ENCODE measurements at regions of chr12 and their contacts with region 1.

Region 1: DNA sequence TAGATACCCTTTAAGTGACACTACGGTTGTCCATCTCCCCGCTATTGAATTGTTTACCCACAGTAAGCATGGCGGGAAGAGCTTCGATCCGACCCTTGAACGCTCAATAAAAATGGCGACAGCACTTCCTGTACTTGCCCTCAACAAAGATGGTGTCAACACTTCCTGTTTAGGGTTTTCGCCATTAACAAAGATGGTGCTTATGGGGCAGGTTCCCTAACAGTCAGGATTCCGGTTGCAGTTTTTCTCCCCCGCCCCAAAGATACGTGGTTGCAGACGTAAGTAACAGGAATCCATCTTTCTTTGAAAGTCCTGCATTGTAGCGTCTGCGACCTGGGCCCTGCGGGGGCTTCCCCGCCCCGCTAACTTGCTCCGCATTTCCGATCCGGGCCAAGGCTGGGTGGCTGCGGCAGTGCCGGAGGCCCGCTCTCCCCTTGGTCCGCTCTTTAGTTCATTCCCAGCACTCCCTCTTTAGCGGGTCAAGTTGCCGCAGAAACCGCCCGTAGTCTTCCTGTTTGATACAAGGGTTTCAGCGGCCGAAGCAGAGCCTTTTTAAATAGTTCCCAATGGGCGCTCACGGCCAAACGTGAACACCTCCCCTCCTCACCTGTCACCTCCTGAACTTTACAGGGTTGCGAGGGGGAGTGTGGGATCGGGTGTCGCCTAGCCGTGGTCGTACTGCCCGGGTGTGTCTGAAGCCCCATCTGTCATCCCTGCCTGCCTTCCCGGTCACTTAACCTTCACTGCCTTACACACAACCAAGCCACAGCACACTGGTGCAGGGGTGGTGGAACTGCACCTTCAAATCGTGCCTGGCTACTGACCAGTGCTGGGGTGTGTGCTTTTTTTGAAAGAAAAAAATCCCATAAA is at the start of gene CRADD:
- DNase-seq: peak; percentile 79 to 90 (median 83)
- ATAC-seq: peak; percentile 86 to 94 (median 92)
- H3K4me3 ChIP-seq: peak within 1 kb of the TSS; percentile 36 to 84 (median 70)
- H3K27ac ChIP-seq: peak within 1 kb of the TSS; percentile 84 to 100 (median 97)
- H3K4me1 ChIP-seq: peaks cover 0 to 52% (median 24%) of the 10 kb centered on the region in 12 donors
- H3K27me3 ChIP-seq: no peaks in the 10 kb centered on the region
- CTCF ChIP-seq: no peak
- POLR2A ChIP-seq: peak in 1 of 2 donors; percentile 73
- total RNA-seq, gene CRADD: 40.1 to 100 (median 56.1) TPM

Region 2: GRCh38 chr12:93603762-93604161 is 73.7 kb before region 1 on chr12:
- intact Hi-C with region 1: loop called in 2 of 10 experiments (anchors 5 to 10 kb)
- DNase-seq: no peak
- ATAC-seq: peak; percentile 51 to 57 (median 54)
- H3K4me3 ChIP-seq: no peak overlapping the region
- H3K27ac ChIP-seq: peak overlapping the region in 10 of 12 donors; percentile 11 to 81 (median 60)
- H3K4me1 ChIP-seq: peaks cover 0 to 23% (median 17%) of the 10 kb centered on the region in 12 donors
- H3K27me3 ChIP-seq: no peaks in the 10 kb centered on the region
- CTCF ChIP-seq: peak in 2 of 12 donors; percentile 22 to 30
- POLR2A ChIP-seq: no peak

Region 3: GRCh38 chr12:93742110-93742934 is 64.9 kb after region 1 on chr12:
- intact Hi-C with region 1: loop called in 9 of 10 experiments (anchors 2 to 5 kb)
- DNase-seq: peak; percentile 73 to 85 (median 80)
- ATAC-seq: peak; percentile 78 to 97 (median 92)
- H3K4me3 ChIP-seq: peak overlapping the region; percentile 33 to 70 (median 64)
- H3K27ac ChIP-seq: peak overlapping the region; percentile 88 to 95 (median 93)
- H3K4me1 ChIP-seq: peaks cover 0 to 85% (median 60%) of the 10 kb centered on the region in 12 donors
- H3K27me3 ChIP-seq: no peaks in the 10 kb centered on the region
- CTCF ChIP-seq: peak in 9 of 12 donors; percentile 17 to 54 (median 36)
- POLR2A ChIP-seq: peak in 1 of 2 donors; percentile 13

Region 4: GRCh38 chr12:94172973-94173372 is 495.5 kb after region 1 on chr12:
- intact Hi-C with region 1: no loop called
- DNase-seq: no peak
- ATAC-seq: peak in 3 of 4 donors; percentile 24 to 75 (median 38)
- H3K4me3 ChIP-seq: no peak overlapping the region
- H3K27ac ChIP-seq: peak overlapping the region in 1 of 12 donors; percentile 90
- H3K4me1 ChIP-seq: peaks cover 0 to 54% (median 0%) of the 10 kb centered on the region in 12 donors
- H3K27me3 ChIP-seq: no peaks in the 10 kb centered on the region
- CTCF ChIP-seq: no peak
- POLR2A ChIP-seq: no peak